Heart left ventricle (tissue), 16 donors: ENCODE measurements at regions of chr7 and their contacts with region 1.

Region 1: DNA sequence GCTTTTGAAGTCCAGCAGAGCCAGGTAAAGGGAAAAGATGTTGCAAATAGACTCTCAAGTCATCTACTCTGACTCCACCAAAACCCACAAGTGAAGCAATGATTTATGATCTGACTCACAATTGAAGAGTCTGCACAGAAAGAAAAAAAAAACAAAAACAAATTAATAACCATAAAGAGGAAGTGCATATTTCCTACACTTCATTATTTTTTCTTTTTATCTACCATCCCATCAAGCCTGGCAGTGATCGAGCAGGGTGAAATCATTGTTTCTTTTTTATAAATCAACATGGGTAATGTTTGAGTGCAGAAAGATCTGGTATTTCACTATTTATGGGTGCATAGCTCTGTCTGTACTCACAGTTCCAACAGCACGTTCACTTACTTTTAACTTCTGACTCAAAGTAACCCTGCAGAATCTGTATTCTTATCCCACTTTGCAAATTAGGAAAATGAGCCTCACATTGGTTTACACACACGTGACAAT is 829.0 kb downstream of the TNS3 start:
- DNase-seq: no peak
- ATAC-seq: peak in 1 of 4 donors; percentile 54
- H3K4me3 ChIP-seq: no peak overlapping the region
- H3K27ac ChIP-seq: no peak overlapping the region
- H3K4me1 ChIP-seq: peaks cover 0 to 18% (median 0%) of the 10 kb centered on the region in 12 donors
- H3K27me3 ChIP-seq: no peaks in the 10 kb centered on the region
- CTCF ChIP-seq: no peak
- POLR2A ChIP-seq: no peak

Region 2: GRCh38 chr7:46764100-46764936 is 11.4 kb after region 1 on chr7:
- intact Hi-C with region 1: loop called in 1 of 10 experiments (anchors 1 kb)
- DNase-seq: peak in 4 of 5 donors; percentile 69 to 72 (median 70)
- ATAC-seq: peak; percentile 87 to 97 (median 96)
- H3K4me3 ChIP-seq: no peak overlapping the region
- H3K27ac ChIP-seq: peak overlapping the region in 2 of 12 donors; percentile 3 to 52
- H3K4me1 ChIP-seq: peaks cover 0 to 16% (median 2%) of the 10 kb centered on the region in 12 donors
- H3K27me3 ChIP-seq: no peaks in the 10 kb centered on the region
- CTCF ChIP-seq: no peak
- POLR2A ChIP-seq: no peak